Activated CD8-positive, alpha-beta memory T cell treated with anti-CD3 and anti-CD28 coated beads, Interleukin-2, amount 10 ng/mL, durations not matched to agents 7 days and 5 days (primary cell): ENCODE measurements at regions of chr1 and their contacts with region 1.

Region 1: GRCh38 chr1:19661721-19662228 is 2.9 kb upstream of the HTR6 start:
- DNase-seq: peak; percentile 56
- ATAC-seq: no peak
- H3K4me3 Mint-ChIP-seq: no peak overlapping the region
- H3K27ac Mint-ChIP-seq: no peak overlapping the region
- H3K4me1 Mint-ChIP-seq: peaks cover 17% of the 10 kb centered on the region
- H3K27me3 Mint-ChIP-seq: peaks cover 34% of the 10 kb centered on the region

Region 2: DNA sequence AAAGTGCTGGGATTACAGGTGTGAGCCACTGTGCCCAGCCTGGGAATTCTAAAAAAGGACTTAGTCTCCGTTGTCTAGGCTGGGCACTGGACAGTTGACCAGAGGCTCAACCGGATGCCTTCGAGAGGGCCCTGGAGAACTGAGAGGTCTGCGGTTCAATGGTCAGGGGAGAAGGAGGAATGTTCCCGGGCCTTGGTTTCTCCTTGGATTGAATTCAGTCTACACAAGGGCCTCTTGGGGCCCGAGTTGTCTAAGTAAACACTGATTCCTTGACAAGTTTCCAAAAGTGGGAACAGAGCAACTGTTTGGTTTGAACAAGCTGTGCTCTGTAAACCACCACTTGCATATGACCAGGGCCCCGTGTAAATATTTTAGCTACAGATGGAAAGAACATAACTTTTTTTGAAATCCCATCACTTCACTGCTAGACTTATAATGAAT is 147.4 kb before region 1 on chr1:
- CTCF ChIA-PET with region 1: no interaction called
- DNase-seq: no peak
- ATAC-seq: no peak
- H3K4me3 Mint-ChIP-seq: no peak overlapping the region
- H3K27ac Mint-ChIP-seq: no peak overlapping the region
- H3K4me1 Mint-ChIP-seq: peaks cover 6% of the 10 kb centered on the region
- H3K27me3 Mint-ChIP-seq: no peaks in the 10 kb centered on the region

Region 3: GRCh38 chr1:19643602-19644394 is 18.0 kb before region 1 on chr1 and contains the start of gene NBL1:
- CTCF ChIA-PET with region 1: interaction called, 24 read pairs
- DNase-seq: peak; percentile 78
- ATAC-seq: peak; percentile 90
- H3K4me3 Mint-ChIP-seq: peak within 1 kb of the TSS; percentile 99
- H3K27ac Mint-ChIP-seq: peak within 1 kb of the TSS; percentile 91
- H3K4me1 Mint-ChIP-seq: peaks cover 35% of the 10 kb centered on the region
- H3K27me3 Mint-ChIP-seq: peaks cover 18% of the 10 kb centered on the region
- total RNA-seq, gene NBL1: 39.4 to 49.8 TPM

Region 4: DNA sequence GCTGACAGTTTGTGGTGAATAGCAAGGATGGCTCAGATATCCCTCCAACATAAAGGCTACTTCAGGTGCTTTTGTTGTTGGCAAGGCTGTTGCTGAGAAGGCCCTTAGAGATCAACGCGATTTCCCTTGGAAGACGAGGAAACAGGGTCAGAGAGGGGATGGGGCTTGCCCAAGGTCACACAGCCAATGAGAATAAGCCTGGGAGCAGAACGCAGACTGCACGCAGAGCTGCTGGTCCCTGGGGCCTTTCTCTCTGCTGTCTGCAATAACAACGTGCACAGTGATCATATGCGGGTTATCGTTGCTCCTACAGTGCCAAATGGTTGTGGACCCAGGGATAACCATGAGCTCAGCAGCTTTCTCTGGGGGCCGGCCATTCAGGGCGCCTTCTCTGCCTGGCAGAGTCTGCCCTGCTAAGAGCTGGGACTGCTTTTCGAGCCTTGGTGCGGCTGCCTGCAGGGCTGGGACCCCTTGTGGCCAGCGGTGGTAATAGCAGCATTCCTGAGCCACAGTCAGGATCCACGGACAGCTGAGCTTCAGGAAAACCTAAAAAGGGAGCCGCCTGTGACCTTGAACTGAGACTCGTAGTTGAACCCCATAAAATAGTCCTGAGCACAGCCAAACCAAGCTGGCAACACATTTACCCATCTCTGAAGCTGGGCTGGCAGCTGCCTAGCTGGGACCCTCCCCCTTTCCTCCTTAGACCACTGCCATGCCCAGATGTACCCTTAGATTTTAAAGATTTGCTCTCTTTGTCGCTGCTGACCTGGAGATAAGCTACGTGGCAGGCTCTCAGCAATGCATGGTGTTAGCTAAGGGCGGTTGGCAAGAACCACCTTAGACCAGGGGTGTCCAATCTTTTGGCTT is 42.7 kb after region 1 on chr1:
- CTCF ChIA-PET with region 1: interaction called, 102 read pairs
- DNase-seq: peak; percentile 61
- ATAC-seq: peak; percentile 53
- H3K4me3 Mint-ChIP-seq: no peak overlapping the region
- H3K27ac Mint-ChIP-seq: no peak overlapping the region
- H3K4me1 Mint-ChIP-seq: peaks cover 19% of the 10 kb centered on the region
- H3K27me3 Mint-ChIP-seq: no peaks in the 10 kb centered on the region

Region 5: DNA sequence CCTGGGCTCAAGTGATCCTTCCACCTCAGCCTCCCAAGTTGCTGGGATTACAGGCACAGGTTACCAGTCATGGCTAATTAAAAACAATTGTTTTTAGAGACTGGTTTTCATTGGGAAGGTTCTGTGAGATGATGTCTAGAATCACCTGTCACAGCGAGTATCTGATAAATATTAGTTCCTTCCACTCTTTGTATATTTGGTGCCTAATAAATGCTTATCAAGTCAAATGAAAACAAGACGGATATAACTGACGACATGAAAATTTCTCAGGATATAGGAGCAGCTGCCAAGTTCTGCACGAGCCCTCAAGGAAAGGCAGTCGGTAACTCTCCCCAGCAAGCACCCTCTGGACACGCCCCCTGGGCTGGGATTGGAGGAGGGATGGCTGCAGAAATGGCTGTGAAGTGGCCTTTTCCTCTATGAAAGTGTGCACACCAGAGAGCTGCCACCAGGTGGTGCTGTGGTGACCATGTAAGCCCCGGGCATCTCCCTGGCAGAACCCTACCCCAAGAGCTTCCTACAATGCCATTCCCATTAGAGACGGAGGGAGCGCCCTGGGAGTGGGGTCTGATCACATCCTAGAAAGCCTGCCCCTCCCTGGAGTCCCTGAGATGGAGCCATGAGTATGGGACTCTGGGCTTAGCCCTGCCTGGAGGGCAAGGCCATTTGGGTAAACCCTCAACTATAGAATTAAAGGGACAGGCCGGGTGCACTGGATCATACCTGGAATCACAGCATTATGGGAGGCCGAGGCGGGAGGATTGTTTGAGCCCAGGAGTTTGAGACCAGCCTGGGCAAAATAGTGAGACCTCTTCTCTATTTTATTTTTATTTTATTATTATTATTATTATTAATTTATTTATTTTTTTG is 53.8 kb after region 1 on chr1:
- CTCF ChIA-PET with region 1: interaction called, 20 read pairs
- DNase-seq: peak; percentile 90
- ATAC-seq: peak; percentile 91
- H3K4me3 Mint-ChIP-seq: no peak overlapping the region
- H3K27ac Mint-ChIP-seq: no peak overlapping the region
- H3K4me1 Mint-ChIP-seq: peaks cover 22% of the 10 kb centered on the region
- H3K27me3 Mint-ChIP-seq: no peaks in the 10 kb centered on the region

Region 6: DNA sequence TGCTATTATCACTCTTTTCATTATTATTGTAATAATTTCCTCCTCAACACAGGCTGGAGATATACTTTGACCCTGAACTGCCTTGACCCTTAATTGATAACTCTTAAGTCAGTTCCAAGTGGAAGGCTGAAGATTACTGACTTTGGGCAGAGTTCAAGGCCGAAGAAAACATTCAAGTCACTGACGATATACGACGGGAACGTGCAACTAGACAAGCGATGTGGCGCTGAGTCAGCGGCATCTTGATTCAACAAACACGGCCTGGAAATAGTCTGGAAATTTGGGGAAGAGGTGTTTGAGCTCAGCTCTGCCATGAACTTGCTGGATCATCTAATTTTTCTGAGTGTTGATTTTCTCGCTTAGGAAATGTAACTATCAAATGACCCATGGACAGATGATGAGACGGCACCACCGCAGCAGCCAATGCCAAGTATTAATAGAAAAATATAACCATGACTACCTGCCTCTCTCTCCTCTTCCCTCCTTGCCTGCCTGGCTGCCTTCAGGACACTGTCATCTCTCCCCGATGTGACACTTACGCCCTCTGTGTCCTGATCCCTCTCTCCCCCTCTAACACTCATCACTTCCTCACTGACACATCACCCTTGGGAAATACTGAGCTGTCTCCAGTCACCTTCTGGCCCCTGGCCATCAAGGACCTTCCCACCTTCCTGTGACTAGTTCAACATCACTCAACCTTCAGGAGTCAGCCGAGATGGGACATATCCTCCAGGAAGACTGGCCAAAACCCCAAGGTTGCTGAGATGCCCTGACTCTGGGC is 88.5 kb after region 1 on chr1:
- CTCF ChIA-PET with region 1: no interaction called
- DNase-seq: no peak
- ATAC-seq: no peak
- H3K4me3 Mint-ChIP-seq: no peak overlapping the region
- H3K27ac Mint-ChIP-seq: no peak overlapping the region
- H3K4me1 Mint-ChIP-seq: no peaks in the 10 kb centered on the region
- H3K27me3 Mint-ChIP-seq: no peaks in the 10 kb centered on the region